Activated CD4-positive, alpha-beta memory T cell treated with anti-CD3 and anti-CD28 coated beads for 36 hours (primary cell): ENCODE measurements at regions of chr14 and their contacts with region 1.

Region 1: GRCh38 chr14:97978341-97978740 is 1181.2 kb downstream of the VRK1 start:
- DNase-seq: peak; percentile 90
- H3K4me3 Mint-ChIP-seq: peak overlapping the region; percentile 84
- H3K27ac Mint-ChIP-seq: peak overlapping the region; percentile 89
- H3K4me1 Mint-ChIP-seq: peaks cover 45% of the 10 kb centered on the region
- H3K27me3 Mint-ChIP-seq: no peaks in the 10 kb centered on the region

Region 2: DNA sequence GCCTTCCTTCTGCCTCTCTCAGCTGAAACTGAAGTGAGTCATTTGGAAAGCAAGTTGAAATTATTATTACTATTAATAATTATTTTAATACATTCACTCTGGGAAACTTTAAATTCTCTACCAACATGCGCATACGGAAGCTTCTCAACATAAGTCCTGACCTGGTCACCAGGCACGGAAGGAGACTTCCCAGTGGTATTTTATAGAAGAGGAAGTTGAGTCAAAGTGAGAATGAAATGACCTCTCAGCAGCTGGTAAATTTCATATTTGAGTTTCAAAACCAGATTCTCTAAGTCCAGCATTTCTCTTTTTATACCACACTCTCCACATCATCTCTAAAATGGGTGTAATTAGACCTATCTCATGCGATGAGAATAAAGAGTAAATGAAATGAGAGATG is 433.8 kb before region 1 on chr14:
- CTCF ChIA-PET with region 1: no interaction called
- POLR2A ChIA-PET with region 1: no interaction called
- intact Hi-C with region 1: no loop called
- DNase-seq: no peak
- H3K4me3 Mint-ChIP-seq: no peak overlapping the region
- H3K27ac Mint-ChIP-seq: no peak overlapping the region
- H3K4me1 Mint-ChIP-seq: peaks cover 15% of the 10 kb centered on the region
- H3K27me3 Mint-ChIP-seq: no peaks in the 10 kb centered on the region

Region 3: DNA sequence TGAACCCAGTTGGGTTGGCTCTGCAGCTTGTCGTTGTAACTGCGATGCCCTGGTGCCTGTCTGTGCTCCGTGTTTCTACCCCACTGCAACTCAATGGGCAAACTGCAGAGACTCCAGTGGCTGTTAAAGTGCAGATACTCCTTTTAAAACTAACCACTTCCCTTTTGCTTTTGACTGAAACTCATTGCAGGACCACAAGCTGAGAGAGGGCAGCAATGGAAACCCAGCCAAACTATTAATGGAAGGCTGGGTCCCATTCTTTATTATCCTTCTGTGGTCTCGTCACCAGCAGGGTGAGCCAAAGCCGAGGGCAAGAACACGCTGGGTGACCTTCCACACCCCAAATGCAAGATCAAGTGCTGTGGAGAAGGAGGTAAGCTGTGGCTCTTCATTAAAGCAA is 270.7 kb before region 1 on chr14:
- CTCF ChIA-PET with region 1: no interaction called
- POLR2A ChIA-PET with region 1: no interaction called
- intact Hi-C with region 1: loop called (anchors 2 kb)
- DNase-seq: peak; percentile 60
- H3K4me3 Mint-ChIP-seq: no peak overlapping the region
- H3K27ac Mint-ChIP-seq: no peak overlapping the region
- H3K4me1 Mint-ChIP-seq: peaks cover 90% of the 10 kb centered on the region
- H3K27me3 Mint-ChIP-seq: no peaks in the 10 kb centered on the region

Region 4: GRCh38 chr14:98014851-98015615 is 36.7 kb after region 1 on chr14:
- CTCF ChIA-PET with region 1: interaction called, 4 read pairs
- POLR2A ChIA-PET with region 1: no interaction called
- intact Hi-C with region 1: loop called (anchors 5 kb)
- DNase-seq: no peak
- H3K4me3 Mint-ChIP-seq: no peak overlapping the region
- H3K27ac Mint-ChIP-seq: no peak overlapping the region
- H3K4me1 Mint-ChIP-seq: peaks cover 70% of the 10 kb centered on the region
- H3K27me3 Mint-ChIP-seq: no peaks in the 10 kb centered on the region

Region 5: DNA sequence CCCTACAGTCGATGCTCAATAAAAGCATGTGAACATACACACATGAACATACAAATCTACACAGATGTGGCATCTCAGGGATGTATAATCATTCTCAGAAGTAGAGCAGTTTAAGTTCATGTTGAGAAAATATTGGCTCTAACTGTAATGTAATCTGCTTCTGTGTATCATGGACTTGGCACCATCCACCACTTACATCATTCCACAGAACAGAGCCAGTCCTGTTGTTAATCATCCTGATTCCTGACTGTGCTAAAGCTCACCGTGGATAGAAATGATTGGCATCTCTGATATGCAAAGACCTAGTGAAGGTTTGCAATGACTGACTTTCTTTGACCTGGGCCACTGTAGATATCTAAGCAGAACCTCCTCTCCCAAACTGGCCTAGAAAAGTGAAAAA is 152.3 kb after region 1 on chr14:
- CTCF ChIA-PET with region 1: interaction called, 67 read pairs
- POLR2A ChIA-PET with region 1: interaction called, 3 read pairs
- intact Hi-C with region 1: no loop called
- DNase-seq: no peak
- H3K4me3 Mint-ChIP-seq: no peak overlapping the region
- H3K27ac Mint-ChIP-seq: no peak overlapping the region
- H3K4me1 Mint-ChIP-seq: peaks cover 14% of the 10 kb centered on the region
- H3K27me3 Mint-ChIP-seq: no peaks in the 10 kb centered on the region

Region 6: GRCh38 chr14:98173305-98173704 is 195.0 kb after region 1 on chr14:
- CTCF ChIA-PET with region 1: interaction called, 9 read pairs
- POLR2A ChIA-PET with region 1: interaction called, 11 read pairs
- intact Hi-C with region 1: loop called (anchors 2 kb)
- DNase-seq: peak; percentile 67
- H3K4me3 Mint-ChIP-seq: peak overlapping the region; percentile 62
- H3K27ac Mint-ChIP-seq: peak overlapping the region; percentile 98
- H3K4me1 Mint-ChIP-seq: peaks cover 98% of the 10 kb centered on the region
- H3K27me3 Mint-ChIP-seq: no peaks in the 10 kb centered on the region

Region 7: GRCh38 chr14:99192028-99192621 is 1213.8 kb after region 1 on chr14:
- CTCF ChIA-PET with region 1: interaction called, 3 read pairs
- POLR2A ChIA-PET with region 1: no interaction called
- intact Hi-C with region 1: loop called (anchors 5 kb)
- DNase-seq: peak; percentile 56
- H3K4me3 Mint-ChIP-seq: peak overlapping the region; percentile 84
- H3K27ac Mint-ChIP-seq: peak overlapping the region; percentile 88
- H3K4me1 Mint-ChIP-seq: peaks cover 92% of the 10 kb centered on the region
- H3K27me3 Mint-ChIP-seq: no peaks in the 10 kb centered on the region